Gastrocnemius medialis (tissue), 4 donors: ENCODE measurements at regions of chr11 and their contacts with region 1.

Region 1: DNA sequence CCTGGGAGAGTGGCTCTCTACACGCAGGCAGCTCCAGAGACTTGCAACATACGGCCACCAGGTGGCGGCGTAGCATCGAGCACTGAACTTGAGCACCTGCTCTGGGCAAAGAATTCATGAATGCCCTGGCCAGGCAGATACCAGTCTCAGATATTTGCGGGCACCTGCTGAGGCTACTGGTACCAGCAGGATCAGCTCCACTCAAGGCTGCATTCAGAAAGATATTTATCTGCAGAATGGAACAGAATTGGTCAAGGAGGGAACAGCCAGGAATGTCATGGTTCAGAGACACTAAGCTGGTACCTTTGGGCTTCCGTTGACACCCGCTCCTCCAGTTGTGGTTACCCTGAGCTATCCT is 10.8 kb upstream of the CCDC86 start:
- DNase-seq: peak; percentile 65 to 77
- ATAC-seq: peak; percentile 92 to 97
- H3K4me3 ChIP-seq: no peak overlapping the region
- H3K27ac ChIP-seq: no peak overlapping the region
- H3K4me1 ChIP-seq: no peaks in the 10 kb centered on the region
- H3K27me3 ChIP-seq: no peaks in the 10 kb centered on the region
- CTCF ChIP-seq: peak; percentile 90 to 96 (median 92)
- POLR2A ChIP-seq: no peak

Region 2: DNA sequence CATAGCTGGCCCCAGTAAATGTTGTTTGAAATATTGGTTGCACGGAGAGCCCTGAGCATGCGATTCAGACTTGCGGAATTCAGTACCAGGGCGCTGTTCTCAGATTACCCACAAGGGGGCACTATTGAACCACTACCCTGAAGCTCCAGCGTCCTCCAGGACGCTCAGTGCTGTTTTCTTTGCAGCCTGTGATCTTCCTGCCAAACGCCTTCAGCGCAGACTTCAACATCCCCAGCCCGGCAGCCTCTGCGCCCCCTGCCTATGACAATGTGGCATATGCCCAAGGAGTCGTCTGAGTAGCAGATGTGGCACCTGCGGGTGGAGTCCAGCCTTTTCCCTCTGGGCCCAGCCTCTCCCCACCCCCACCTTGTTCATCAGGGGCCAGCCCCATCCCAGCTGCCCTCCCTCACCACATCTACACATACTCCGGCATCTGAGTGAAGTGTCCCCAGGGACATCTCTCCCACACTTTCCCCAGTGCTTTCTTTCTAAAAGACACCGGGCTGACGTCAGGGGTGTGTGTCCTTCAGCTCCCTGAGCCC is 55.6 kb before region 1 on chr11:
- in situ Hi-C with region 1: no loop called
- intact Hi-C with region 1: loop called (anchors 2 kb)
- DNase-seq: peak; percentile 64 to 70
- ATAC-seq: peak; percentile 92 to 93
- H3K4me3 ChIP-seq: no peak overlapping the region
- H3K27ac ChIP-seq: peak overlapping the region in 1 of 4 donors; percentile 14
- H3K4me1 ChIP-seq: no peaks in the 10 kb centered on the region
- H3K27me3 ChIP-seq: no peaks in the 10 kb centered on the region
- CTCF ChIP-seq: peak; percentile 63 to 89 (median 75)
- POLR2A ChIP-seq: no peak

Region 3: GRCh38 chr11:60866911-60867870 is 36.1 kb after region 1 on chr11 and contains the start of gene ZP1:
- in situ Hi-C with region 1: no loop called
- intact Hi-C with region 1: loop called (anchors 5 kb)
- DNase-seq: no peak
- ATAC-seq: no peak
- H3K4me3 ChIP-seq: no peak within 1 kb of the TSS
- H3K27ac ChIP-seq: no peak within 1 kb of the TSS
- H3K4me1 ChIP-seq: peaks cover 13 to 25% of the 10 kb centered on the region in 2 donors
- H3K27me3 ChIP-seq: no peaks in the 10 kb centered on the region
- CTCF ChIP-seq: no peak
- POLR2A ChIP-seq: no peak
- total RNA-seq, gene ZP1: not detected

Region 4: GRCh38 chr11:60887556-60887955 is 56.4 kb after region 1 on chr11:
- in situ Hi-C with region 1: no loop called
- intact Hi-C with region 1: loop called (anchors 1 kb)
- DNase-seq: no peak
- ATAC-seq: peak; percentile 54 to 86
- H3K4me3 ChIP-seq: no peak overlapping the region
- H3K27ac ChIP-seq: no peak overlapping the region
- H3K4me1 ChIP-seq: no peaks in the 10 kb centered on the region
- H3K27me3 ChIP-seq: no peaks in the 10 kb centered on the region
- CTCF ChIP-seq: peak; percentile 22 to 51 (median 46)
- POLR2A ChIP-seq: no peak

Region 5: DNA sequence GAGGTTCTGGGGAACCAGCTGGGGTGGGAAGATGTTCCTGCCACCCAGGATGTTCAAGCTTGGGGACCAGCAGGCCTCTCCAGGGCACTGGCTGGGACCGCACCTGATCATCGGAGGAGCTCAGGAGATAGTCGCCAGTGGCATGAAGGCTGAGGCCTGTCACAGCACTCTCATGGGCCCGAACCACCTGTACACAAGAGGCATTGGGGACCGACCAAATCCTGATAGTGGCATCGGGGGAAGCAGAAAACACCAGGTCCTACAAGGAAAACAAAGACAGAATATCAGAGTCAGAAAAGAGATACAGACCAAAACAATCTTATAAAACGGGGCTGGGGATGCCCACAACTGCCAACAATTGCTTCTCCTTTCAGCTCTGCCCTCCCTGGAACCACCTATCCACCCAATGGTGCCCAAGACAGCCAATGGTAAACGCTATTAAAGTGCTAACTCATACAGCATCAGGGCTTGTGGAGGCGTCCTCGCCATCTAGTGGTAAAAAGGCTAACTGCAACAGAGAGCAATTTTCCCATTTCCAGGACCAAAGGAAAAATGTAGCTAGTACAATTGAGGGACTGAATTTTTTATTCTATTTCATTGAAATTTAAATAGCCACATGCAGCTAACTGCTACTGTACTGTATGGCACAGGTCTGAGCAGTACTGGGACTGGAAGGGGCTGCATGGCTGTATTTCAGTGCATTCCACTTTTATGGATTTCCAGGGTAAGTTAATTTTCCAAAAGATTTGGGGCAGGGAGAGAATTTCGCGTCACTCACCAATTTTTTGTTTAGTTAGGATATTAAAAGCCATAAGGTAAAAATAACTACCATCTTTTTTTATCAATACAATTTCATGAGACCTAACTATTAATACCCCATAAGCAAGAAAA is 68.2 kb after region 1 on chr11:
- in situ Hi-C with region 1: loop called in 3 of 4 experiments (anchors 5 kb)
- intact Hi-C with region 1: loop called (anchors 1 kb)
- DNase-seq: peak in 1 of 2 donors; percentile 49
- ATAC-seq: peak; percentile 78 to 96
- H3K4me3 ChIP-seq: no peak overlapping the region
- H3K27ac ChIP-seq: peak overlapping the region; percentile 0 to 59 (median 52)
- H3K4me1 ChIP-seq: peaks cover under 1 to 10% of the 10 kb centered on the region in 2 donors
- H3K27me3 ChIP-seq: no peaks in the 10 kb centered on the region
- CTCF ChIP-seq: peak; percentile 82 to 97 (median 92)
- POLR2A ChIP-seq: no peak

Region 6: GRCh38 chr11:61129639-61130523 is 298.8 kb after region 1 on chr11:
- in situ Hi-C with region 1: loop called in 1 of 4 experiments (anchors 25 kb)
- intact Hi-C with region 1: loop called (anchors 2 kb)
- DNase-seq: peak; percentile 53 to 69
- ATAC-seq: peak; percentile 58 to 83
- H3K4me3 ChIP-seq: no peak overlapping the region
- H3K27ac ChIP-seq: peak overlapping the region in 1 of 4 donors; percentile 28
- H3K4me1 ChIP-seq: peaks cover 11 to 14% of the 10 kb centered on the region in 2 donors
- H3K27me3 ChIP-seq: no peaks in the 10 kb centered on the region
- CTCF ChIP-seq: peak; percentile 82 to 96 (median 92)
- POLR2A ChIP-seq: no peak

Region 7: GRCh38 chr11:61187505-61188130 is 356.5 kb after region 1 on chr11:
- in situ Hi-C with region 1: loop called in 3 of 4 experiments (anchors 25 kb)
- intact Hi-C with region 1: loop called (anchors 1 kb)
- DNase-seq: peak in 1 of 2 donors; percentile 42
- ATAC-seq: peak in 1 of 2 donors; percentile 64
- H3K4me3 ChIP-seq: no peak overlapping the region
- H3K27ac ChIP-seq: no peak overlapping the region
- H3K4me1 ChIP-seq: no peaks in the 10 kb centered on the region
- H3K27me3 ChIP-seq: peaks cover 0 to 4% (median 0%) of the 10 kb centered on the region in 3 donors
- CTCF ChIP-seq: peak; percentile 65 to 87 (median 81)
- POLR2A ChIP-seq: no peak